ENCODE measurements at regions of chr7 and their contacts with region 1.

Region 1: DNA sequence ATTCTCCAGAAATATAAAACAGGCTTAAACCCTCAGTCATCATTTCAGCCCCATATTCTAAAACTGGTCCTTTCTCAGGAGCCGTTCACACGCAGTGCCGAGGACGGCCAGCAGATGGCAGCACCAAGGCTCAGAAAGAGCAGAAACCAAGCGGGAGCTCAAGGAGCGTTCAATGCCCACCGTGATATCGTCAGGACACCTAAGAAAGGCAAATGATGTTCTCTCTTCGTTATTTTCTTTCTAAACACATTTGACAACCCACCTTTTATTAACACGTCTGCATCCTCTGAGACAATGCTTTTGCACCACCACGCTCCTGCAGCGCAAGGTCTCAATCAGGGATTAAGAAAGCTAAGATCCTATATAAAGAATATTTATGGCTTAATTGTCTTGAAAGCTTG is 45.7 kb upstream of the RBM33 start:
- DNase-seq: no peak
- H3K4me3 ChIP-seq: no peak overlapping the region
- H3K27ac ChIP-seq: no peak overlapping the region
- H3K4me1 ChIP-seq: no peaks in the 10 kb centered on the region
- H3K27me3 ChIP-seq: no peaks in the 10 kb centered on the region
- CTCF ChIP-seq: peak; percentile 88 to 98 (median 93)
- POLR2A ChIP-seq: no peak

Region 2: GRCh38 chr7:155043756-155044155 is 555.1 kb before region 1 on chr7:
- intact Hi-C with region 1: no loop called
- DNase-seq: no peak
- H3K4me3 ChIP-seq: no peak overlapping the region
- H3K27ac ChIP-seq: no peak overlapping the region
- H3K4me1 ChIP-seq: no peaks in the 10 kb centered on the region
- H3K27me3 ChIP-seq: no peaks in the 10 kb centered on the region
- CTCF ChIP-seq: no peak
- POLR2A ChIP-seq: no peak

Region 3: DNA sequence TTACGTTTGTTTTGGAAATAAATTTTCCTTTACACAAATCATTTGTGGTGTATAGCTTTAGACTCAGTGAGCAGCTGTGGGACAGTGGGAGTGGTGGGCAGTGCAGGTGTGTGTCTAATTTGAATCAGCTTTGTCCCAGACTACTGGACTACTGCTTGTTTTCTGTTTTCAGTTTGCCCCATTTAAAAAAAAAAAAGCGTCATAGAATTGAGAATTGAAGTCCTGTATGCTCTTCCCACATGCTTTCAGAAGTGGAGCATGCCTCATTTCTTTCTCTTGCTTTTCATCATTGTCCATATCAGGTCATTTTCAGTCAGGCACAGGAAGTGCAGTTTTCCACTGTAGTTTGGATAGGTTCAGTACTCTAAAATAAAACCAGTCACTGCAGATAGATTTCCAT is 147.4 kb after region 1 on chr7:
- intact Hi-C with region 1: loop called (anchors 5 kb)
- DNase-seq: no peak
- H3K4me3 ChIP-seq: no peak overlapping the region
- H3K27ac ChIP-seq: no peak overlapping the region
- H3K4me1 ChIP-seq: peaks cover 10% of the 10 kb centered on the region
- H3K27me3 ChIP-seq: no peaks in the 10 kb centered on the region
- CTCF ChIP-seq: no peak
- POLR2A ChIP-seq: no peak

Region 4: DNA sequence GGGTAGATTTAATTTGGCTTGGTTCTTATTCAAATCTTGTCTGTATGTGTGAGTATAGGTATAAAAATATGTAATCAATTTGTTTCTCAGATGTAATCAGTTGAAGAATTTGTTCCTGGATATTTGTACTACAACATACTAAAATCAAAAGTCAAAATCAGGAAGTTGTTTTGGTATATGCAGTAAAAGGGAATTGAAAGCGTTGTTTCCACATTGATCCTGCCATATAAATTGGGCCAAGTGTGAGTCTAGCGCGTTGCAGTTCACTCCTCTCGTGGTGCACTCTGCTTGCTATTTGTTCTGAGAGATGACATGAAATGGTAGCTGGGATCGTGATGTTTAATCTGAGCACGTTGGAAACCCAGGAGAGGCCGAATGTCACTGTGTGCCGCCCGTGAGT is 157.5 kb after region 1 on chr7:
- intact Hi-C with region 1: loop called (anchors 5 kb)
- DNase-seq: no peak
- H3K4me3 ChIP-seq: no peak overlapping the region
- H3K27ac ChIP-seq: no peak overlapping the region
- H3K4me1 ChIP-seq: peaks cover 37% of the 10 kb centered on the region
- H3K27me3 ChIP-seq: no peaks in the 10 kb centered on the region
- CTCF ChIP-seq: no peak
- POLR2A ChIP-seq: no peak

Measured in vagina (tissue), 2 donors.